ENCODE measurements at regions of chr2 and their contacts with region 1.

Region 1: GRCh38 chr2:206442833-206443734 is at the start of gene ADAM23:
- DNase-seq: peak; percentile 85
- total RNA-seq, gene ADAM23: 78.7 TPM

Region 2: DNA sequence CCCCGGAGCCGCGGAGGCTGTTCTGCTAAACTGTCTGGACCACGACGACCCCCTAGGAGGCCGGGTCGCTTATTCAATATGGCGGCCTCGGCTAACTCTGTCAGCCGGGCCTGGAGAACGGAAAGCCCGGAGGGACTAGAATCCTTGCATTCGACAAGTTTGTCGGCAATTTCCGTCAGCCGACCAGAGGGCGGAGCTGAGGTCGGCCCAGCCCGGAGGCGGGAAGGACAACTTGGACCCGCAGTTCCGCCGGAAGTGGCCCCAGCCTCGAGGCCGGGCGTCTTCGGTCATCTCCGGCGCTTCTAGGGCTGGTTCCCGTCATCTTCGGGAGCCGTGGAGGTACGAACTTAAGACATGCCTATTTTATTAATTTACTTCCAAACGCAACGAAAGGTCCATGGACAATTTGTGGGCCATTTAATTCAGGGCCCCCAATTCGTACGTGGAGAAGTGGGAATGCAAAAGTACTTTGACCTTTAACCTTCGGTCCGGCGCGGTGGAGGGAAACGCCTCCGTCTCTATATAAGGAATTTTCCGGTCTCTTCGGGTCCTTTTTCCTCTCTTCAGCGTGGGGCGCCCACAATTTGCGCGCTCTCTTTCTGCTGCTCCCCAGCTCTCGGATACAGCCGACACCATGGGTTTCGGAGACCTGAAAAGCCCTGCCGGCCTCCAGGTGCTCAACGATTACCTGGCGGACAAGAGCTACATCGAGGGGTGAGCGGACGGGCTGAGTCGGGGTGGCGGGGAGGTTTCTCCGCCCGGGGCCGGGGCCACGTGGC is 283.5 kb before region 1 on chr2 and contains the starts of genes EEF1B2 and NDUFS1:
- intact Hi-C with region 1: loop called (anchors 10 kb)
- DNase-seq: peak; percentile 99
- total RNA-seq, gene EEF1B2: 223 TPM
- total RNA-seq, gene NDUFS1: 388 TPM

Region 3: DNA sequence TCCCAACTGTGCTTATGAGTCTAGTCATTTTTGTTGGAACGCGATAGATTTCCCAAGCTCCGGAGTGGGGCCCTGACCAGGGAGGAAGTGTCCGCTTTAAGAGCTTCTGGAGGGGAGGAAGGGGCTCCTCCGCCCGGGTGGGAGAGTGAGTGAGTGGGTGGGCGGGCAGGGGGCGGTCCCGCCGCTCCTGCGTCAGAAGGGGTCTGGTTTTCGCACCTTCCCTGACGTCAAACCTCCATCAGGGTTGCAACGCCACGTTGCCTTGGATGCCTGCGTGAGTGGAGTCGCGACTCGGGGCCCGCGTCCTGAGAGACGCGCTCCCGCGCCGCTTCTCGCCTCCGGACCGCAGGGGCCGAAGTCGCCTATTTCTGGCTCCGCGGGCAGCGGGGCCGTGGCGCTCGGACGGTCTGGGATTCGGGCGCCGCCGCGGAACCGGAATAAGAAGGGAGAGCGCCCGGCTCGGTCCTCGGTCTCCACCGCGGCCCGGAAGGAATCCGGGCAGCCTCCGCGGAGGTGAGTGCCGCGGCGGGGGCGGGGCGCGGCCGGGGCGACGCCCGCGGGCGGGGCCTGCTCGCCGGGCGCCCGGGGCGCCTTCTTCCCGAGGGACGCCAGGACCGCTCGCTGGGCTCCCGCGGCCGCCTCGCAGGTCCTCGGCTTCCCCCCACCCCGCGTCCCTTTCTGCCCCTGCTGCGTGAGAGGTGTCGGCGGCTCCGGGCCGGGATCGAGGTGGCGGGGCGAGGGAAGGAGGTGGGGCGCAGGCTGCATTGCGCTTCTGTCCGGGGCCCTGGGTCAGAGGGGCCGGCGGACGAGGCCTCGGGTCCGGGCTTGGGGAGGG is 168.4 kb before region 1 on chr2 and contains the start of gene ZDBF2:
- intact Hi-C with region 1: loop called (anchors 10 kb)
- DNase-seq: no peak
- total RNA-seq, gene ZDBF2: 15.4 TPM

Region 4: GRCh38 chr2:206462240-206462854 is 19.3 kb after region 1 on chr2:
- intact Hi-C with region 1: loop called (anchors 2 kb)
- DNase-seq: no peak

Region 5: DNA sequence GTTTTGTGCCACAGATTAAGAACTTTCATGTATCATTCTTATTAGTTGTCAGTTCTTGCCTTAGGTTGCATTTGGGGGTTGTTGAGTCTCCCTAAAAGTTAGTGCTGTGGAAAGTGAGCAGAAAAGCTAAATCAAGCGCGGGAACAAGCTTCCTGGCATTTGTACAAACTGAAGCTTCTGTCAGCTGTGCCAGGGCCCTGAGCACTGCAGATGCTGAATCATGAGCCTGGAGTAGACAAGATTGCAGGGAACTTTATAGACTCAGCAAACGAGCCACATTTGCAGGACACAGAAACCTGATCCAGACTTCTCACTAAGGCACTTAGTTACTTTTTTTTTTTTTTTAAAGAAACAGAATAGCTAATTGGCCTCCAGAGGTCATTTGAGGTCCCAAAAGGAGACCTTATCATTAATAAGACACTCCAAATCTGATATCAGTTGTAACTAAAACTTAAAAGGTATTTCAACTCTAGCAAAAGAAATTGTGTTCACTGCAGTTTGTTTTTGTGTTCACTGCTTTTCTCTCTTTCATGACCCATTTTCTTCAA is 89.0 kb after region 1 on chr2:
- intact Hi-C with region 1: loop called (anchors 5 kb)
- DNase-seq: no peak